ENCODE measurements at regions of chr11 and their contacts with region 1.

Region 1: DNA sequence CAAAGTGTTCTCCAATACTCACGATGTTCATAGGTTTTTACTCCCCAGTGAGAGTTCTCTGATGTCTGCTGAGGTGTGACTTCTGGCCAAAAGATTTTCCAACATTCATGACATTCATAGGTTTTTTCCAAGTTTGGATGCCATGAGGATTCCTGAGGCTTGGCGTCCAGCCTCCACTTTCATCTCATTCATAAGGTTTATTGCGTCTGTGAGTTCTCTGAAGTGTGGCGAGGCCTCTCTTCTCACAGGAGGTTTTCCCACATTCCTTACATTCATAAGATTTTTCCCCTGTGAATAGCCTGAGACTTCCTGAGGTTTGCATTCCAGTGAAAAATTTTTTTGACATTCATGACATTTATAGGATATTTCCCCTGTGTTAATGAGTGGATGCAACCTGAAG is 1014.1 kb downstream of the LRRC4C start:
- DNase-seq: no peak
- ATAC-seq: no peak
- H3K4me3 ChIP-seq: no peak overlapping the region
- H3K27ac ChIP-seq: no peak overlapping the region
- H3K4me1 ChIP-seq: no peaks in the 10 kb centered on the region
- H3K27me3 ChIP-seq: no peaks in the 10 kb centered on the region

Region 2: DNA sequence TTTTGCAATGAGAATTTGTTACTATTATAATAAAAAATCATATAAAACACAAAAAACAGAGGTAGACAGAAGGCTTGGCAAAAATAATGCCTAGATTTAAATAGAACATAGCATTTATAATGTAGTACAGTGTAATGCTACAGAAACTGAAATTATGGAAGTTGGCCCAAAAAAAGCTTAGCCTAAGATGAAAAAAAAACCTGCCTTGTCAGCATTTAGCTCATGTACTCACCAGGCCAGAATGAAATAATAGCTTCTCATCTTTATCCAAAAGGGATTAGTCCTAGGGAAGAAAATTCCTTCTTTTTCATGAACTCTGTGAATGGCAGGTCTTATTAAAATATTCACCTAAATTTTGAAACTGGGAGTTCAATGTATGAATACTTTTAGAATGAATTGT is 62.9 kb after region 1 on chr11:
- intact Hi-C with region 1: loop called in 1 of 4 experiments (anchors 10 kb)
- DNase-seq: no peak
- ATAC-seq: no peak
- H3K4me3 ChIP-seq: no peak overlapping the region
- H3K27ac ChIP-seq: no peak overlapping the region
- H3K4me1 ChIP-seq: no peaks in the 10 kb centered on the region
- H3K27me3 ChIP-seq: no peaks in the 10 kb centered on the region

Measured in right cardiac atrium (tissue), 5 donors.